B cell (primary cell): ENCODE measurements at regions of chr2 and their contacts with region 1.

Region 1: DNA sequence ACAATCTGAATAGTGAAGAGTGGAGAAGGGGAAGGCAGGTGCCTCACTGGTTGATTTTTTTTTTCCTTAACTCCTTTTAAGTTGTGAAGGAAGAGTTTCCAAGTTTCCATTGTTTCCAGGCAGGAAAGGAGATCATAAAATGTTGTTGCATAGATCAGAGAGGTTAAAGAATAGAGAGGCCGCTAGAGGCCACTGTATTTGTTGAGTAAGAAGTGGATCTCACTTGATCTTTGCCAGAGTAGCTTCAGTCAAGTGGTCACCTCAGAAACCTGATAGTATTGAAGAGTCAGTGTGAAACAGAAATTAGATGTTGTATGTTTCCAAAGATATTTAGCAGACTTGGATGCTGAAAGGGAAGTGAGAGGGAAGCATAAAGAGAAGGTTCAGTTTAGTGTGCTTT is 17.6 kb downstream of the CTNNA2 start:
- DNase-seq: no peak
- ATAC-seq: no peak
- H3K4me3 ChIP-seq: no peak overlapping the region
- H3K4me3 Mint-ChIP-seq: no peak overlapping the region
- H3K27ac ChIP-seq: no peak overlapping the region
- H3K27ac Mint-ChIP-seq: no peak overlapping the region
- H3K4me1 ChIP-seq: no peaks in the 10 kb centered on the region
- H3K4me1 Mint-ChIP-seq: no peaks in the 10 kb centered on the region
- H3K27me3 ChIP-seq: no peaks in the 10 kb centered on the region
- H3K27me3 Mint-ChIP-seq: no peaks in the 10 kb centered on the region
- CTCF ChIP-seq: no peak

Region 2: DNA sequence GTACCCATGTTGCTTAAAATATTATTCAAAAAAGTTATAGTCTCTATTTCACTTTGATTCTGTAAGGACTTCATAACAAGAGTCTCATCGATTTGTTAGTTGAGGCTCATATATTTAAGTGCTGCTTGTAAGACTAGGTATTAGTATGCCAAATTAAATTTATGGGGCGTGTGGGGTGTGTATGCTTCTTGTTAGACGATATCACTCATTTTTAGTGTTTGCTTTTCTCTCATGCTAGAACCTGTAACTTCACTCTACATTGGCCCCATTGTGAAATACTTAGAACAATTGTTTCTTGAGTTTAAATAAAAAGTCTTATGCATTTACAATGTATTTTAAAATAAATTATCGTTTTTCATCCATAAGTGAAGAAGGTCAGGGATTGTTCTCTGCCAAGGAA is 46.0 kb after region 1 on chr2:
- CTCF ChIA-PET with region 1: no interaction called
- POLR2A ChIA-PET with region 1: no interaction called
- intact Hi-C with region 1: loop called (anchors 2 kb)
- DNase-seq: no peak
- ATAC-seq: no peak
- H3K4me3 ChIP-seq: no peak overlapping the region
- H3K4me3 Mint-ChIP-seq: no peak overlapping the region
- H3K27ac ChIP-seq: no peak overlapping the region
- H3K27ac Mint-ChIP-seq: no peak overlapping the region
- H3K4me1 ChIP-seq: no peaks in the 10 kb centered on the region
- H3K4me1 Mint-ChIP-seq: no peaks in the 10 kb centered on the region
- H3K27me3 ChIP-seq: no peaks in the 10 kb centered on the region
- H3K27me3 Mint-ChIP-seq: no peaks in the 10 kb centered on the region
- CTCF ChIP-seq: no peak